Activated B cell treated with CpG ODN at 0.5 μM for 24 hours (primary cell): ENCODE measurements at regions of chr3 and their contacts with region 1.

Region 1: DNA sequence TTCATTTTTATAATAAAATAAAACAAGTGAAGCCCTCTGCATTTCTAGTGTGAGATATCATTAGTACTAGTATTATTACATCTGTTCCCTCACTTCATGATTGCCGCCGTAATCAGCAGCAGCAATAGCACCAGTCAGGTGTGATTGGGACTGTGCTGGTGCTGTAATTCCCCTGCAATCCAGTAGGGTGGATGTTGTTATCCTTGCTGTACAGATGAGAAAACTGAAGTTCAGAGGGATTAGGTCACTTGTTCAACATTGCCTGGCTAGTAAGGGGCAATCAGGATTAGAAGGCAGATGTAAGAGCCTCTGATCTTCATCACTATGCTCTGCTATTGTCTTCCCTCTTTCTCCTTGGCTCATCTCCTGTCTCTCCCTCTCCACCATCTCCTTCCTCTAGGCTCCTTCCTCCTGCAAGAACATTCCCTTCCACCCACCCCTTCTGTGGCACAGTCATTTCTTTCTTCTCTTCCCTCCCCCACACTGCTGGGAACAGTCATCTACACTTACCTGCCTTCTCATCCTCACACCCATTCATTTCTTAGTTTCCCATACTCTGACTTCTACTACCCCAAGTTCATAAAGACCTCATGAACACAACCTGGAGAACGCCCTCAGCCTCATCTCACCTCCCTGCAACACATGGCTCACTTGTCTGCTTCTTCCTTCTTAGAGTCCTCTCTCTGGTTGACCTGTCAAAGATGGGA is 29.7 kb downstream of the CRYGS start:
- DNase-seq: no peak
- ATAC-seq: no peak
- H3K4me3 Mint-ChIP-seq: no peak overlapping the region
- H3K27ac Mint-ChIP-seq: no peak overlapping the region
- H3K4me1 Mint-ChIP-seq: peaks cover 74% of the 10 kb centered on the region
- H3K27me3 Mint-ChIP-seq: peaks cover 7% of the 10 kb centered on the region
- CTCF ChIP-seq: no peak

Region 2: DNA sequence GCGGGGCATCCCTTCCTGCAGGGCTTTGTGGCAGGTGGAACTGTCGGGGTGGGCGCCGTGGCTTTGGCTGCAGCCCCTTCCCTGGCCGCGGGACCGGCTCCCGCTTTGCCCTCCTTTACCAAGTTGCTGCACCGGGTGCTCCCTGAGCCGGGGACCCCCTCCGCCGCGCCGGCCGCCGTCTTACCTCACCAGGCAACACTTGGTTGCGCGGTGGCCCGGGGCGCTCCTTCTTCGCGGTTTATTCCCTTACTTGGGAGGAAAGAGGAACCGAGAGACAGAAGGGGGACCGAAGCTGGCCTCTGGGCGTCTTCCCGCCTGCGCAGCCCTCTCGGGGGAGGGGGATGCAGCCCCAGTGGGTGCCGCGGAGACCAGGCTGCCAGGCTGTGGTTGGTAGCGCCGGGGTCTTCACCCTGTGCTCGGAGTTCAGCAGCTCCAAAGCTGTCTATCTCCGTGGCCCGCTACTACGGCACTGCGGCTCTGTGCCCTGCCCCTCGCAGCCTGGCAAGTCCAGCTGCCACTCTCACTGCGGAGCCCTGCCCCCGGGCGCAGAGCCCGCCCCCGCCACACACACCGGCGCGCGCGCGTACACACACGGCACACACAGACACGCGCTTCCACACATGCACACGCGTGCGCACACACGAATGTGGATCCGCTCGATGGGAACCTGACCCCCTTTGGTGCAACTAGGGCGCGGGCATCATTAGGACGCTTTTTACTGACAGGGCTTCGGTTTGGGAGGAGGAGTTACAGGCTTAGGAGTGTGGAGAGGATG is 152.5 kb before region 1 on chr3 and contains the start of gene DGKG:
- CTCF ChIA-PET with region 1: no interaction called
- POLR2A ChIA-PET with region 1: interaction called, 5 read pairs
- intact Hi-C with region 1: loop called (anchors 5 kb)
- DNase-seq: peak; percentile 64
- ATAC-seq: peak; percentile 90
- H3K4me3 Mint-ChIP-seq: peak within 1 kb of the TSS; percentile 83
- H3K27ac Mint-ChIP-seq: peak within 1 kb of the TSS; percentile 38
- H3K4me1 Mint-ChIP-seq: peaks cover 28% of the 10 kb centered on the region
- H3K27me3 Mint-ChIP-seq: peaks cover 7% of the 10 kb centered on the region
- CTCF ChIP-seq: no peak
- total RNA-seq, gene DGKG: 3.9 and 4.2 TPM in 2 replicates

Region 3: DNA sequence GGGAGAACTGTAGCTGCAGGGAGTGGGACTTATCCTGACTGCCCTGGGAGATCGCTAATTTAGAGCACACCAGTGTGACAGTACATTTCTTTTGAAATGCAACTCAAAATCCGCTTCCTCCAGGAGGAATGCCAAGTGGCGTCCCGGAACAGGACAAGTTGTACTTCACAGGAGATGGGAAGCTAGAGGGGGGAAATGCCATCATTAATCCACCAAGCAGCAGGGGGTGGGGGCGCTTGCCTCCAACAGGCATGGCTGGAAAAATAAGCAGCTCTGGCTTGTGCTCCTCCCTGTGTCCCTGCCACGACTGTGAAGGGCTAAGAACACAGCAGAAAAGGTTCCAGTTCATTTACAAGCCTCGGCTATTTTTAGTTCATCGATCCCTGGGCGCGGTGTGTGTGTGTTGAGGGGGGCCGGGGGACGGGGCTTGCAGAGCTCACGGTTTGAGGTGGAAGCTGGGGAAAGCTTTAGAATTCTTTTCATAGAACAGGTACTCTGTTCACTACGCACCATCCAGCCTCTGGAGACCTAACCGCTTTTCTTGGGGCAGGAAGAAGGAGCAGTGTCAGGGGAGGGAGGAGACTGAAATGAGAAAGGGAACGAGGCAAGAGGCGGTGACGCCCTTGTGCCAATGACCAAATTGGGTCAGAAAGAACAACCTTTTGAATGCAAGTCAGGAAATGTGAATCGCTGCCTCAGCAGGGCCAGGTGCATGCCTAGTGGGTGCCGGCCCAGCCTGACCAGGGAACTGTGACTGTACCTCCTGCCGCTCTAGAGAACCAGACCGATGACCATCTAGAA is 100.6 kb before region 1 on chr3:
- CTCF ChIA-PET with region 1: no interaction called
- POLR2A ChIA-PET with region 1: no interaction called
- intact Hi-C with region 1: loop called (anchors 5 kb)
- DNase-seq: no peak
- ATAC-seq: peak; percentile 75
- H3K4me3 Mint-ChIP-seq: peak overlapping the region; percentile 76
- H3K27ac Mint-ChIP-seq: peak overlapping the region; percentile 47
- H3K4me1 Mint-ChIP-seq: peaks cover 22% of the 10 kb centered on the region
- H3K27me3 Mint-ChIP-seq: peaks cover 2% of the 10 kb centered on the region
- CTCF ChIP-seq: no peak

Region 4: GRCh38 chr3:186425788-186426730 is 88.4 kb before region 1 on chr3:
- CTCF ChIA-PET with region 1: no interaction called
- POLR2A ChIA-PET with region 1: no interaction called
- intact Hi-C with region 1: loop called (anchors 5 kb)
- DNase-seq: no peak
- ATAC-seq: peak; percentile 42
- H3K4me3 Mint-ChIP-seq: no peak overlapping the region
- H3K27ac Mint-ChIP-seq: no peak overlapping the region
- H3K4me1 Mint-ChIP-seq: peaks cover 22% of the 10 kb centered on the region
- H3K27me3 Mint-ChIP-seq: no peaks in the 10 kb centered on the region
- CTCF ChIP-seq: no peak

Region 5: GRCh38 chr3:186526256-186526606 is 11.8 kb after region 1 on chr3:
- CTCF ChIA-PET with region 1: interaction called, 10 read pairs
- POLR2A ChIA-PET with region 1: interaction called, 8 read pairs
- intact Hi-C with region 1: loop called (anchors 2 kb)
- DNase-seq: peak; percentile 50
- ATAC-seq: peak; percentile 80
- H3K4me3 Mint-ChIP-seq: peak overlapping the region; percentile 55
- H3K27ac Mint-ChIP-seq: peak overlapping the region; percentile 86
- H3K4me1 Mint-ChIP-seq: peaks cover 85% of the 10 kb centered on the region
- H3K27me3 Mint-ChIP-seq: peaks cover 2% of the 10 kb centered on the region
- CTCF ChIP-seq: no peak

Region 6: DNA sequence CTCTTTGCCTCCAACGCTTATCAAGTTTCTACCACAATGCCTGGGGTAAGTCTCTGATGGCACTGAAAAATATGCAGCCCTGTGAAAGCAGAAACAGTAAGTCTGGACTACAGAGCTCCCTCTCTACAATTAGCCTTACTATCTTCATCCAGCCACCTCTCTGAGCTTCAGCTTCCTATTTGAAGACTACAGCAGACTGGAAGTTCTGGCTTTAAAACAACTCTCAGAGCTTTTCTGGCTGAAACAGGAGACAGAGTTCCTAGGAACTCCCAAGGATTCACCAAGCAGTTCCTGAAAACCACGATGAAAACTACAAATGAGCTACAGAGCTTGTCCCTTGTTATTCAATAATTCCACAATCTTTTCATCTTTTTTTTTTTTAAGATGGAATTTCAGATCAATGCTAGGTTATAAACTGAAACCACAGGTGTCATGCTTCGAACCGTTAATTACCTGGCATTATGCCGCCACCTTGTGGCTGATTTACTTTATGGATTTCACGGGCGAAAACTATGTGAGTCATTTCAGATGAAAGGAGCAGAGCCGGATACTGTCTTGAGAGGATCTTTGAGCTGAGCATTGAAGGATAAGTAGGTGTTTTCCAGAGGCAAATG is 25.9 kb after region 1 on chr3:
- CTCF ChIA-PET with region 1: interaction called, 24 read pairs
- POLR2A ChIA-PET with region 1: interaction called, 50 read pairs
- intact Hi-C with region 1: loop called (anchors 2 kb)
- DNase-seq: peak; percentile 55
- ATAC-seq: peak; percentile 88
- H3K4me3 Mint-ChIP-seq: no peak overlapping the region
- H3K27ac Mint-ChIP-seq: no peak overlapping the region
- H3K4me1 Mint-ChIP-seq: peaks cover 35% of the 10 kb centered on the region
- H3K27me3 Mint-ChIP-seq: no peaks in the 10 kb centered on the region
- CTCF ChIP-seq: no peak

Region 7: DNA sequence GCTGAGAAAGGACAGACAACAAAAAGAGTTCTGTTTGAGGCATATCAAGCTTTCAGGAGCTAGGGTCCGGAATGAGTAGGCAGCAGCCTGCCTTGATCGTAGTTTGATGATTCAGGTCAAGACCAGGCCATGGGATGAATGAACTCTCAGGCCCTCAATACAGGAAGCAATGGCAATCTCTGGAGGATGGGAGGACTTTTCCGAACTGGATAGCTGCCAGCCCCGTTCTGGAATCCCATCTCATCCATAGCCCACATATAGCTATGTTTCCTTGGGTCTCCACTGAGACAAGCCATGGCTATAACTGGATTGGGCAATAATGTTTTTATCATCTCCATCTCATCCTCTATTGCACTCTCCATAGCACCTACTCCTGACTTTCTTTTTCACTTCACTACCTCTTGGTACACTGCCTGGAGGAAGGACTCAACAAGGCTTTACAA is 111.2 kb after region 1 on chr3:
- CTCF ChIA-PET with region 1: no interaction called
- POLR2A ChIA-PET with region 1: no interaction called
- intact Hi-C with region 1: no loop called
- DNase-seq: no peak
- ATAC-seq: no peak
- H3K4me3 Mint-ChIP-seq: no peak overlapping the region
- H3K27ac Mint-ChIP-seq: no peak overlapping the region
- H3K4me1 Mint-ChIP-seq: no peaks in the 10 kb centered on the region
- H3K27me3 Mint-ChIP-seq: peaks cover 11% of the 10 kb centered on the region
- CTCF ChIP-seq: no peak